ENCODE measurements at regions of chr7 and their contacts with region 1.

Region 1: DNA sequence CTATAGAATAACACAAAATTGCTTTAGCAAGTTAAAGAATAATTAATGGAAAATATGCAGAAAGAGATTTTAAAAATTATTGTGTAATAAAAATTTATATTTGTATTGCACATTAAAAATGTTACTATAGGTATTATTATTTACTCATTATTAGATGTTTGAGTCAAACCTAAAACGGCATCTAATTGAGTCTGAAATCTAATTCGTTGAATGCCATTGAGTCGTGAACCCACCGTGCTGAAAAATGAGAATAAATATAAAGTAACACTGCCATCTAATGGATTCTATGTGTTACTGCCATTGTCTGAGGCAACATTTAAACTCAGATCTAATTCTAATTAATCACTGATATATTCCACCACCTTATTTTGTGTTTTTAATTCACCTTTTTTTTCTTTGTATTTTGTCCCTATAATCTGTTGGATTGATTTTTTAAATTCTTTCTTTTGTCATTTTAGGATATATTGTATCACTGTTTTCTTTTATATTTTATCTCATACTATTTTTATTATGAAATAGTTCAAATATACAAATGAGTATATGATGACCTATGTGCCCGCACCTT is 62.2 kb downstream of the SAMD9 start:
- DNase-seq: no peak
- ATAC-seq: peak in 1 of 4 donors; percentile 50
- H3K4me3 ChIP-seq: no peak overlapping the region
- H3K27ac ChIP-seq: no peak overlapping the region
- H3K4me1 ChIP-seq: peaks cover 5% of the 10 kb centered on the region
- H3K27me3 ChIP-seq: no peaks in the 10 kb centered on the region
- CTCF ChIP-seq: peak; percentile 80

Region 2: GRCh38 chr7:92421676-92422435 is 633.8 kb before region 1 on chr7:
- intact Hi-C with region 1: loop called in 1 of 2 experiments (anchors 10 kb)
- DNase-seq: no peak
- ATAC-seq: no peak
- H3K4me3 ChIP-seq: no peak overlapping the region
- H3K27ac ChIP-seq: no peak overlapping the region
- H3K4me1 ChIP-seq: no peaks in the 10 kb centered on the region
- H3K27me3 ChIP-seq: peaks cover 0 to 11% (median 0%) of the 10 kb centered on the region in 3 donors
- CTCF ChIP-seq: no peak

Region 3: DNA sequence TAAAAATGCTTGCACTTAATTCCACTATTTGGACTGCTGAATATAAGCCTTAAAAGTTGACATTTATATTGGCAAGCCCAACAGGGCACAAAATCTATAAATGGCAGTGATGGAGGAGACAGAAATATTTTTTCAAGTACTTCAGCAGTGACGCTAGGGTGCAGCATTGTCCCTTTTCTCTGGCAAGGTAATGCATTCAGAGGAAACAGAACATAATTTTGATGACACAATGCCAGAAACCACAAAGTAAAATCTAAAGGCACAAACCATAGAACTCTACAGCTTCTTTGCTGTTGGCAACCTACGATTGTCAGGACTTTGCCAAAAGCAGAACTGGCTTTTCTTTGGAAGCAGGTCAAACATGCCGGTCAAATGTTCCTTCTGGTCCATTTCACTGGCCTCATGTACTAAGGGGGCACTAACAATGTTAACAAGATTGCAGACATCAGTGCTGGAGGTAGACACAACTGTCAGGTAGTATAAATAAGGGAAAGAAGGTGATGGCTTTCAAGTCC is 434.5 kb before region 1 on chr7:
- intact Hi-C with region 1: loop called (anchors 2 to 5 kb)
- DNase-seq: peak; percentile 27 to 52
- ATAC-seq: peak; percentile 39 to 85 (median 70)
- H3K4me3 ChIP-seq: no peak overlapping the region
- H3K27ac ChIP-seq: peak overlapping the region; percentile 1
- H3K4me1 ChIP-seq: no peaks in the 10 kb centered on the region
- H3K27me3 ChIP-seq: no peaks in the 10 kb centered on the region
- CTCF ChIP-seq: peak; percentile 57

Region 4: GRCh38 chr7:93279541-93279940 is 223.9 kb after region 1 on chr7:
- intact Hi-C with region 1: no loop called
- DNase-seq: no peak
- ATAC-seq: no peak
- H3K4me3 ChIP-seq: no peak overlapping the region
- H3K27ac ChIP-seq: no peak overlapping the region
- H3K4me1 ChIP-seq: no peaks in the 10 kb centered on the region
- H3K27me3 ChIP-seq: no peaks in the 10 kb centered on the region
- CTCF ChIP-seq: no peak